Activated T-helper 2 cell treated with anti-CD3 and anti-CD28 coated beads, Interferon-gamma antibody, Interleukin-2, Interleukin-4, amounts not matched to agents 10 μg/mL and 5 μg/mL and 100 μg/mL, durations not matched to agents 14 hours and 24 hours and 36 hours (primary cell): ENCODE measurements at regions of chr2 and their contacts with region 1.

Region 1: GRCh38 chr2:60818272-60818671 is 62.2 kb downstream of the PAPOLG start:
- DNase-seq: no peak
- H3K4me3 Mint-ChIP-seq: peak overlapping the region; percentile 54
- H3K27ac Mint-ChIP-seq: peak overlapping the region; percentile 87
- H3K4me1 Mint-ChIP-seq: peaks cover 42% of the 10 kb centered on the region
- H3K27me3 Mint-ChIP-seq: no peaks in the 10 kb centered on the region

Region 2: GRCh38 chr2:60806988-60807681 is 11.1 kb before region 1 on chr2:
- intact Hi-C with region 1: loop called (anchors 1 kb)
- DNase-seq: no peak
- H3K4me3 Mint-ChIP-seq: peak overlapping the region; percentile 10
- H3K27ac Mint-ChIP-seq: peak overlapping the region; percentile 89
- H3K4me1 Mint-ChIP-seq: peaks cover 48% of the 10 kb centered on the region
- H3K27me3 Mint-ChIP-seq: no peaks in the 10 kb centered on the region

Region 3: GRCh38 chr2:60873381-60873780 is 55.1 kb after region 1 on chr2:
- intact Hi-C with region 1: loop called (anchors 1 kb)
- DNase-seq: no peak
- H3K4me3 Mint-ChIP-seq: no peak overlapping the region
- H3K27ac Mint-ChIP-seq: peak overlapping the region; percentile 69
- H3K4me1 Mint-ChIP-seq: peaks cover 26% of the 10 kb centered on the region
- H3K27me3 Mint-ChIP-seq: no peaks in the 10 kb centered on the region

Region 4: GRCh38 chr2:60899230-60899891 is 81.1 kb after region 1 on chr2:
- intact Hi-C with region 1: loop called (anchors 1 kb)
- DNase-seq: no peak
- H3K4me3 Mint-ChIP-seq: peak overlapping the region; percentile 54
- H3K27ac Mint-ChIP-seq: peak overlapping the region; percentile 94
- H3K4me1 Mint-ChIP-seq: peaks cover 38% of the 10 kb centered on the region
- H3K27me3 Mint-ChIP-seq: no peaks in the 10 kb centered on the region